Cardiac septum (tissue), 1 donor: ENCODE measurements at regions of chr3 and their contacts with region 1.

Region 1: DNA sequence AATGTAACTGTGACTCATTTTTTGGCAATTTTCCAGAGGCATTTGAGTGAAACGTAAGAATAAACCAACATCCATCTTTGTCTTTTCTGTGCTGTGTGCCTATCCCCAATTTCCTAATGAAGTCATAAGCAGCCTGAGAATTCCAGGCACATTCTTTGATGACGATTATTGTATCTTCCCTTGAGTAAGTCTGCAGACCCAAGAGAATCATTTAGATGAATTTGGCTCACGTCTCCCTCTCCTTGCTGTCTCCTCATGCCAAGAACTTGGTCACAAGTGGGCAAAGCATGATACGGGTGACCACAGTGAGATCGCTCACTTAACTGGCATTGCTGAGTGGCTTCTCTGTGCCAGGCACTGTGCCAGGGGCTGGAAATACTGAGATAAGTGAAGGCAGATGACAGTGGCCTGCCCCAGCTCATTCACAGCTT is 384.5 kb upstream of the IL12A start:
- DNase-seq: peak; percentile 90

Region 2: GRCh38 chr3:159859424-159859823 is 255.3 kb after region 1 on chr3:
- intact Hi-C with region 1: loop called (anchors 1 kb)
- DNase-seq: no peak